ENCODE measurements at regions of chrX and their contacts with region 1.

Region 1: DNA sequence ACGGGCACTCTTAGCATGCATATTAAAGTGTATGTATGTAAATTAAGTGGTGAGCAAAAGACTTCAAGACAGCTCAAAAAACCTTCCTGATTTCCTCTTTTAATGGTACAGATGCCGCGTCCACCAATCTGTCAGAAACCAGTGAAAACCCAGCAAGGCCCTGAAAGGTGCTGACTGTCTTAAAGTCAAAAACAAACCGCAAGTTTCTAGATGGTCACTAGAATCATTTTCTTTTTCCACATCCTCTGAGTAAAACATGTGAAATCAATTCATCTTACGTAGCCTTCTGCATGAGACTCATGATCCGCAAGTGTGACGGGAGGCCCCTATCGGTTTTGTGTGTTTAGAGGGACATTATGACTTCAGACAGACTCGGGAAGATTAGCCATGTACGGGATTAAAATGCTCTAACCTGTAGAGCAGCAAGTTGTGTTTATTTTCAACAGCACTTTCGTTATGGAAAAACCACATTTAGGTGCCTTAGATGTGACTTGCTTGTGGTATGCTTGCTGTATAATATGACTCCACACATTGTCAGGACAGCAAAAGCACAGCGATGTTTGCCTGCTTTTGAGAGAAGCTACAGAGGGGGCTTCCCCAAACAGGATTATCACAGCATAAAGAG is 88.2 kb upstream of the STS start:
- DNase-seq: peak; percentile 49
- H3K4me3 Mint-ChIP-seq: no peak overlapping the region
- H3K27ac Mint-ChIP-seq: peak overlapping the region; percentile 40
- H3K4me1 Mint-ChIP-seq: peaks cover 18% of the 10 kb centered on the region
- H3K27me3 Mint-ChIP-seq: no peaks in the 10 kb centered on the region

Region 2: DNA sequence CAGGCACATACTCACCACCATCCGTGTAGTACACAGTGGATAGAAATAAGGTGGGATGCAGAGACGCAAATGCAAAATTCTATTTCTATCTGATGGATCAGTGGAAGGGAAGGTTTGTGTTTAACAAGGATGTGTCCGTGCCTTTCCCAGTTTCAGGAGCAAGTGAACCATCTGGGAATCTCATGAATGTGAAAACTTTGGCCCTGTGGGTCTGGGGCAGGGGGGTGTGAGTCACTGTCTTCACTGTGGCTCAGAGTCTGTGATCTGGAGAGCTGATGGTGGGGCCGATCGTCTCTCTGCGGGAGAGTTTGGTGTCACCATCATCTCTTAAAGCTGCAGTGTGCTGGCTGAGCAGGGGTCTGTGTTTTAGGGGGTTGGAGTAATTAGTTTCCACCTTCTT is 91.1 kb before region 1 on chrX:
- CTCF ChIA-PET with region 1: no interaction called
- POLR2A ChIA-PET with region 1: no interaction called
- intact Hi-C with region 1: no loop called
- DNase-seq: no peak
- H3K4me3 Mint-ChIP-seq: no peak overlapping the region
- H3K27ac Mint-ChIP-seq: no peak overlapping the region
- H3K4me1 Mint-ChIP-seq: no peaks in the 10 kb centered on the region
- H3K27me3 Mint-ChIP-seq: no peaks in the 10 kb centered on the region

Region 3: DNA sequence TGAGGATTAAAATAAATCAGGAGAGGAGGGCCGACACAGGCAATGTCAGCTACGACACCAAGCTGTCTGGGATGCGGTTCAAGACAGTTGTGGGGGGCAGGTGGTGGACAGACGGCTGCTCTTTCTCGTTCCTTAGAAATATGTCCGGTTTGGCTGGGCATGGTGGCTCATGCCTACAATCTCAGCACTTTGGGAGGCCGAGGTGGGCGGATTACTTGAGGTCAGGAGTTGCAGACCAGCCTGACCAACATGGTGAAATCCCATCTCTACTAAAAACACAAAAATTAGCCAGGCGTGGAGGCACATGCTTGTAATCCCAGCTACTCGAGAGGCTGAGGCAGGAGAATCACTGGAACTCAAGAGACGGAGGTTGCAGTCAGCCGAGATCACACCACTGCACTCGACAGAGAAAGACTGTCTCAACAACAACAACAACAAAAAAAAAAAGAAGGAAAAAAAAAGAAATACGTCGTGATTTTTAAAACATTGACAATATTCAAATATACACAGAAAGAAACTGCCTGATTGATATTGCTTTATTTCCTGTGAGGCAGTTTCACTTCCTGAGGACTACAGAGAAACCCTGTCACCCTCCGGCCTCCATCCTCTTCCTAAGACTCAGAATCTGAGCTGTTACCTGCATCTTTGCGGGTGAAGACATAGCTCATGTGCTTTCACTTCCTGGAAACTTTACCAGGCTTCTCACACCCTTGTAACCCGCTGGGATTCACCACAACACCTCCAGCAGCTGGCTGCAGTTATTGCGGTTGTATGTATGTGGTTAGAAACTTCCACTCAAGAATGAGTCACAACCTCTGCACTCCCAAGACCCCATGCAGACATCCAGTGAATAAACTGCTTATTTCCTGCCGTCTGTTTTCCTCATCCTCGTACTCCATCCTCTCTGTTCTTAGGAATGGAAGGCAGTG is 24.4 kb after region 1 on chrX:
- CTCF ChIA-PET with region 1: interaction called, 3 read pairs
- POLR2A ChIA-PET with region 1: interaction called, 3 read pairs
- intact Hi-C with region 1: loop called (anchors 1 kb)
- DNase-seq: peak; percentile 69
- H3K4me3 Mint-ChIP-seq: no peak overlapping the region
- H3K27ac Mint-ChIP-seq: peak overlapping the region; percentile 4
- H3K4me1 Mint-ChIP-seq: peaks cover 38% of the 10 kb centered on the region
- H3K27me3 Mint-ChIP-seq: no peaks in the 10 kb centered on the region

Region 4: GRCh38 chrX:7147978-7148824 is 88.9 kb after region 1 on chrX and contains the start of gene PUDP:
- CTCF ChIA-PET with region 1: no interaction called
- POLR2A ChIA-PET with region 1: interaction called, 4 read pairs
- intact Hi-C with region 1: loop called (anchors 10 kb)
- DNase-seq: peak; percentile 86
- H3K4me3 Mint-ChIP-seq: peak within 1 kb of the TSS; percentile 80
- H3K27ac Mint-ChIP-seq: peak within 1 kb of the TSS; percentile 85
- H3K4me1 Mint-ChIP-seq: peaks cover 15% of the 10 kb centered on the region
- H3K27me3 Mint-ChIP-seq: no peaks in the 10 kb centered on the region
- total RNA-seq, gene PUDP: 16.5 to 17.4 TPM

Region 5: DNA sequence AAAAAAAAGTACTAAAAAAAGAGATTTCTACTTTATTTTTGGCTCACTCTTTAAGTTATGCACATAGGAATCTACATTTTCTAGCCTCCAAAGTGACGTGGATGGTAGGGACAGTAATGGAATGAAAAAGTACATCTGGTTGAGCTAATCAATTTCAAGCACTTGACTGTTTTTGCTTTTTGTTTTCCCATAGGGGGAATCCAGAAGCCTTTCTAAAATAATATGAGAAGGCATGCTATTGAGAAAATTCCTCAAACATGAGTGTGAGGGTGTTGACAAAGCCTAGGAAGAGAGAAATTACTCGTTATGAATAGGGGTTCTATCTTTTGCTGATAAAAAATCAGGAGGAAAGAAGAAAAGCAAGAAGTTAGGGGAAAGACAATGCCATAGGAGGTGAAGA is 331.1 kb after region 1 on chrX:
- CTCF ChIA-PET with region 1: no interaction called
- POLR2A ChIA-PET with region 1: no interaction called
- intact Hi-C with region 1: no loop called
- DNase-seq: no peak
- H3K4me3 Mint-ChIP-seq: no peak overlapping the region
- H3K27ac Mint-ChIP-seq: no peak overlapping the region
- H3K4me1 Mint-ChIP-seq: no peaks in the 10 kb centered on the region
- H3K27me3 Mint-ChIP-seq: no peaks in the 10 kb centered on the region